ENCODE measurements at regions of chr2 and their contacts with region 1.

Region 1: GRCh38 chr2:71558300-71559051 is 105.1 kb downstream of the DYSF start:
- DNase-seq: peak; percentile 48
- H3K4me3 ChIP-seq: no peak overlapping the region
- H3K27ac ChIP-seq: no peak overlapping the region
- H3K4me1 ChIP-seq: no peaks in the 10 kb centered on the region
- H3K27me3 ChIP-seq: no peaks in the 10 kb centered on the region

Region 2: DNA sequence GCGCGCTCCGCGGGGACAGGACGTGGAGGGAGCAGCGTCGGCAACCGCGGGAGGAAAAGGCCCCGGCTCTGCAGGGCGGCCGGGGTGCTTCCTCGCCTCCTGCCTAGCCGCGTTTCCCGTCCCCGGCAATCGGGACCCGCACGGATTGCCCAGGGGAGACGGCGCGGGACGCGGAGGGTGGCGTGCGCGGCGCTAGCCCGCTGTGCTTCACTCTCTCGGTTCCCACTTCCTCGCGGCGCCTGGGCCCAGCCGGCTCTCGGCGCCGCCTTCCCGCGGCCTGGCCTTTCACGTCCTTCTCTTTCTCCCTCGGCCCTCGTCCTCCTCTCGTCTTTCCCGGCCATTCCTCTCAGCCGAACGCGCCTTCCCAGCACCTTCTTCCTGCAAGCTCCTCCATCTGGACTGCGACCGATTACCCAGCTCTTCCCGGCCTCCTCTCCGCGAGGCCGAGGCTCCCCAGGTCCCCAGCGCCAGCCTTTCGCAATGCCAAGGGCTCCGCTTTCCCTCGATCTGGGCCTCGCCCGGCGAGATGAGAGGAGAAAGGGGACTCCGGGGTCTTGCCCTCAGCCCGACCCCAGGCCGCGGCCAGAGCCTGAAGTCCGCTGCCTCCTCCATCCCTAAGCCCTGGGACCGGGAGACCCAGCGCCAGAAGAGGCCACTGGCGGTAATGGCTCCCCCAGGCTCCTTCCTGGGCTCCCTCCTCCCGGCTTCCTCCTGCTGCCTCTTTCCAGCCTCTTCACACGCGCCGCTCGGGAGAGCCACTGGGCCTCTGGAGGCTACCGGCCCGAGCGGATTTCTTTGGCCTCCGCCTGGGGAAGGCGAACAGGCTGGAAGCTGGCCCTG is 657.0 kb before region 1 on chr2:
- in situ Hi-C with region 1: no loop called
- DNase-seq: peak; percentile 62
- H3K4me3 ChIP-seq: peak overlapping the region; percentile 75
- H3K27ac ChIP-seq: no peak overlapping the region
- H3K4me1 ChIP-seq: no peaks in the 10 kb centered on the region
- H3K27me3 ChIP-seq: peaks cover 34% of the 10 kb centered on the region

Region 3: GRCh38 chr2:71801969-71802368 is 243.5 kb after region 1 on chr2:
- in situ Hi-C with region 1: loop called (anchors 10 kb)
- DNase-seq: peak; percentile 79
- H3K4me3 ChIP-seq: no peak overlapping the region
- H3K27ac ChIP-seq: no peak overlapping the region
- H3K4me1 ChIP-seq: no peaks in the 10 kb centered on the region
- H3K27me3 ChIP-seq: no peaks in the 10 kb centered on the region

Region 4: DNA sequence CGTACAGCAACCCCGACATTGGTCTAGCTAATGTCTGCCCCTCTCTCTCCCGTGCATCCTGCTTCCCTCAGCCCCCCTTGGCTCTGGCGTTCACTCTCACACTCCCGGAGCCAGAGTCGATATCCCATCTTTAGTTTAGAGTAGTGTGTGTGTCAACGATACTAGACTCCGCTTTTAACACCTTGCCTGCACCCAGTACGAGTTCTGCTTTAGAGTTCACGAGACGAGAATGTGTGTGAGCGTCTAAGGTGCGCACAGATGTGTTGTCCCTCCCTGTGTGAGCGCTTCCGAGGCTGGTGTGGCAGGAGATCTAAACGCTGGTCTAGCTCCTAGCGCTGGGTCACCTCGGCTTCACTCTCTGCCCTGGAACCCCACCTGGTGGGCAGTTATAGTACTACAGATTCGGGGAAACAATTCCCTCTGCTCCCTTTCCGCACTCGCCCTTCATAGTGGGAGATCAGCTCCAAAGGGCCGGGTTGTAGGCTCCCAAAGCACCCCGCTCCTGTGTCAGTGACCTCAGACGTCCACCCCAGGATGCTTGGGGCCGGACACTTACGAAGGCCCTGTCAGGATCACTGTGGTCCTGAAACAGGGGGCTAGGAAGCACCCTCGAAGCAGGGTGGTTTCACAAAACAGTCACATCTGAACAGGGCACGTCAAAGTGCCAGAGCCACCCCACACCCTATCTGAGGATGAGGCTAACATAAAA is 591.8 kb after region 1 on chr2:
- in situ Hi-C with region 1: loop called (anchors 10 kb)
- DNase-seq: peak; percentile 84
- H3K4me3 ChIP-seq: peak overlapping the region; percentile 71
- H3K27ac ChIP-seq: no peak overlapping the region
- H3K4me1 ChIP-seq: peaks cover 5% of the 10 kb centered on the region
- H3K27me3 ChIP-seq: peaks cover 40% of the 10 kb centered on the region

Region 5: GRCh38 chr2:72745679-72746368 is 1187.3 kb after region 1 on chr2:
- in situ Hi-C with region 1: loop called (anchors 25 kb)
- DNase-seq: peak; percentile 76
- H3K4me3 ChIP-seq: no peak overlapping the region
- H3K27ac ChIP-seq: no peak overlapping the region
- H3K4me1 ChIP-seq: peaks cover 13% of the 10 kb centered on the region
- H3K27me3 ChIP-seq: no peaks in the 10 kb centered on the region